HEK293T (cell line): ENCODE measurements at regions of chr10 and their contacts with region 1.

Region 1: GRCh38 chr10:124530215-124530665 is 68.6 kb downstream of the LHPP start:
- DNase-seq: peak; percentile 96

Region 2: DNA sequence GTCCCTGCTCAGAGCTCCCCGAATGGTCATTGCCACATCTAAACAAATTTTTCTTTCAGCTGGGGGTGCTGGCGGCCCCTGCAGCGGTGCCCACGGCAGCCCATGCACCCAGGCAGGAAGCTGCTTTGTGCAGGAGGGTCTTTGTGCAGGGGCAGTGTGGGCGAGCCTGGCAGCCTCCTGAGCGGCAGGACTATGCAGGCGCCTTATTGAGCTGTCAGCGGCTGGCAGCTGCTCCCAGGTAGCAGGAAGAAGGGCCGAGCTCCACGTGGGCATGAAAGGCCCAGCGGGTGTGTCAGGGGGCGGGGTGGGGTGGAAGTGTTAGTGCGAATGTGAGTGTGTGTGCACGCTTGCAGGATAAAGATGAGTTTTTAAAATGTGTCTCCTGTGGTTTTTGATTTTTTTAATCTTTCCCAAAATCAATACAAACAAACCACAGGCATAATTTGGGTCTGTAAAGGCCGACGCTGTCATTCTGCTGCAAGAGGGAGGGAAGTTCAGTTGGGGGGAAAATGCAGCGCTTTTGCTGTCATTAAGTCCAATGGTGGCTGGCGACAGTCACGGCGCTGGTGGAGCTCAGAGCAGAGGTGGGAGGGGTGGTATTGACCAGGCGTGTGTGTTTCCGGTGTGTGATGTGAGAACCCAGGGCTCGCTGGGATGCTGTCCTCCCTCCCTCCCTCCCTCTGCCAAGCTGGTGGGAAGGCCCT is 15.3 kb after region 1 on chr10:
- CTCF ChIA-PET with region 1: no interaction called
- POLR2A ChIA-PET with region 1: no interaction called
- DNase-seq: no peak

Region 3: DNA sequence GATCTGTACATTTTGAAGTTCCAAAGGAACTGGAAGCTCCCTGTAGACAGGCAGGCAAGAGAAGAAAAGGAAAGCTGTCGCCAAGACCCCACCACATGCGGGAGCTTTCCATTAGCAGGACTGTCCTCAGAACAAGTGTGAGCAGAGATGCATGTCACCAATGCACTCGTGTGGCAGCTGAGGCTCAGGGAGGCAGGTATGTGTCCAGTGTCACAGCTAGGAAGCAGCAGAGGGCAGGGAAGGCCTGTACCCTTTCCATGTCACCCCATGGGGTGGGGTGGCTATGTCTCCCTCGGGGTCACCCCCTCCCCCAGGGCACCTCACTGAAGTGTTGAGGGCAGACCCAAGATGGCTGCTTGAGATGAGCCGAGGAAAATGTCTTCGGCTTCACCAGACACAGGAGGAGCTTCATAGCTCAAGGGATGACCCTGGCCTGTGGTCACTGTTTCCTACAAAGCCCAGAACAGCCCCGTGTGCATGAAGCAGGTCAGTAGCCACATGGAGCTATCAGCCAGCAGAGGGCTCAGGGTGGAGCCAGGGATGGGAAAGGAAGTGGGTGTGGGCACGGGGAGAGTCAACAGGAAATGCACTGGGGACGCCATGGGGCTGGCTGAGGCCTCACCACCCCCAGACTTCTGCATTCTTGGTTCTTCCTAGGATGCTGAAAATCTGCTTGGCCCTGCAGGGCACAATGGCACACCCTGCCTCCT is 117.3 kb after region 1 on chr10:
- CTCF ChIA-PET with region 1: no interaction called
- POLR2A ChIA-PET with region 1: no interaction called
- DNase-seq: no peak

Region 4: GRCh38 chr10:124741281-124741921 is 211.2 kb after region 1 on chr10:
- CTCF ChIA-PET with region 1: interaction called, 13 read pairs
- POLR2A ChIA-PET with region 1: no interaction called
- DNase-seq: peak; percentile 86